ENCODE measurements at regions of chr11 and their contacts with region 1.

Region 1: GRCh38 chr11:47552566-47553416 is at the start of gene CELF1:
- DNase-seq: peak; percentile 85 to 97 (median 92)
- ATAC-seq: peak; percentile 96
- H3K4me3 ChIP-seq: peak within 1 kb of the TSS; percentile 86 to 92
- H3K4me3 Mint-ChIP-seq: peak within 1 kb of the TSS; percentile 93
- H3K27ac ChIP-seq: peak within 1 kb of the TSS; percentile 69 to 82
- H3K27ac Mint-ChIP-seq: peak within 1 kb of the TSS; percentile 97
- H3K4me1 ChIP-seq: peaks cover 41% of the 10 kb centered on the region
- H3K4me1 Mint-ChIP-seq: peaks cover 45% of the 10 kb centered on the region
- H3K27me3 ChIP-seq: no peaks in the 10 kb centered on the region
- H3K27me3 Mint-ChIP-seq: no peaks in the 10 kb centered on the region
- CTCF ChIP-seq: peak; percentile 85
- total RNA-seq, gene CELF1: 93.2 to 96.1 TPM

Region 2: GRCh38 chr11:46936138-46937110 is 616.4 kb before region 1 on chr11 and contains the start of gene CSTPP1:
- CTCF ChIA-PET with region 1: no interaction called
- POLR2A ChIA-PET with region 1: no interaction called
- intact Hi-C with region 1: loop called in 1 of 2 experiments (anchors 10 kb)
- DNase-seq: peak; percentile 80 to 97 (median 93)
- ATAC-seq: peak; percentile 96
- H3K4me3 ChIP-seq: peak within 1 kb of the TSS; percentile 73 to 82
- H3K4me3 Mint-ChIP-seq: peak within 1 kb of the TSS; percentile 97
- H3K27ac ChIP-seq: peak within 1 kb of the TSS; percentile 58 to 71
- H3K27ac Mint-ChIP-seq: peak within 1 kb of the TSS; percentile 95
- H3K4me1 ChIP-seq: peaks cover 9% of the 10 kb centered on the region
- H3K4me1 Mint-ChIP-seq: peaks cover 20% of the 10 kb centered on the region
- H3K27me3 ChIP-seq: no peaks in the 10 kb centered on the region
- H3K27me3 Mint-ChIP-seq: peaks cover 6% of the 10 kb centered on the region
- CTCF ChIP-seq: no peak
- total RNA-seq, gene CSTPP1: 4.1 to 4.6 TPM

Region 3: GRCh38 chr11:47478651-47479329 is 74.0 kb before region 1 on chr11:
- CTCF ChIA-PET with region 1: no interaction called
- POLR2A ChIA-PET with region 1: no interaction called
- intact Hi-C with region 1: loop called in 1 of 2 experiments (anchors 2 kb)
- DNase-seq: no peak
- ATAC-seq: no peak
- H3K4me3 ChIP-seq: no peak overlapping the region
- H3K4me3 Mint-ChIP-seq: no peak overlapping the region
- H3K27ac ChIP-seq: no peak overlapping the region
- H3K27ac Mint-ChIP-seq: peak overlapping the region; percentile 33
- H3K4me1 ChIP-seq: no peaks in the 10 kb centered on the region
- H3K4me1 Mint-ChIP-seq: no peaks in the 10 kb centered on the region
- H3K27me3 ChIP-seq: no peaks in the 10 kb centered on the region
- H3K27me3 Mint-ChIP-seq: no peaks in the 10 kb centered on the region
- CTCF ChIP-seq: no peak

Region 4: GRCh38 chr11:47509077-47509536 is 43.7 kb before region 1 on chr11:
- CTCF ChIA-PET with region 1: no interaction called
- POLR2A ChIA-PET with region 1: no interaction called
- intact Hi-C with region 1: loop called in 1 of 2 experiments (anchors 5 kb)
- DNase-seq: no peak
- ATAC-seq: no peak
- H3K4me3 ChIP-seq: no peak overlapping the region
- H3K4me3 Mint-ChIP-seq: no peak overlapping the region
- H3K27ac ChIP-seq: no peak overlapping the region
- H3K27ac Mint-ChIP-seq: peak overlapping the region; percentile 73
- H3K4me1 ChIP-seq: peaks cover 37% of the 10 kb centered on the region
- H3K4me1 Mint-ChIP-seq: peaks cover 64% of the 10 kb centered on the region
- H3K27me3 ChIP-seq: no peaks in the 10 kb centered on the region
- H3K27me3 Mint-ChIP-seq: no peaks in the 10 kb centered on the region
- CTCF ChIP-seq: no peak

Region 5: DNA sequence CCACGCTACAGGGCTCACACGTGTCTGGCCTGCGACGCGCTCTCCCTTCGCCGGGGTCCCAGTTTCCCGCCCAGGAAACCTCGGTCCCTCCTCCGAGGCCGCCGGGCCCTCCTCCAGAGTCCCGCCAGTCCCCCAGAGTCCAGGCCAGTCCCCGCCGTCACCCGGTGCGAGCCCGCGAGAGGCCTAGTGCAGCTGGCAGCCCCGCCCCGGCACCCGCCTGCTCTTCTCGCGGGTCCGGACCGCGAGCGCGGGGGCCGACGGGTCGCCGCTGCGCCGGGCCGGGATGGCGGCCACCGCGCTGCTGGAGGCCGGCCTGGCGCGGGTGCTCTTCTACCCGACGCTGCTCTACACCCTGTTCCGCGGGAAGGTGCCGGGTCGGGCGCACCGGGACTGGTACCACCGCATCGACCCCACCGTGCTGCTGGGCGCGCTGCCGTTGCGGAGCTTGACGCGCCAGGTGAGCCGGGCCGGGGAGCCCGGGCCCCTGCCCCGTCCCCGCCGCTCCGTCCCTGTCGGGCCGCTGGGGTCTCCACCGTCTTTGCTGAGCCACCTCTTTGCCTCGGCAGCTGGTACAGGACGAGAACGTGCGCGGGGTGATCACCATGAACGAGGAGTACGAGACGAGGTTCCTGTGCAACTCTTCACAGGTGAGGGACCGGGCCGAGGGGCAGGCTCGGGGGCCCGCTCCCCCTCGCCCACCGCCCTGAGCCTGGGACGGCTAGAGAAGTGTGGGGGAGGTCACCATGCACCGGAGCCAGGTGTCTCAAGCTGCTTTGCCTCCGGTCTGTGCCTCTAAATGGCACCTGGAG is 12.8 kb after region 1 on chr11 and contains the start of gene PTPMT1:
- CTCF ChIA-PET with region 1: interaction called, 6 read pairs
- POLR2A ChIA-PET with region 1: interaction called, 19 read pairs
- intact Hi-C with region 1: loop called in 1 of 2 experiments (anchors 1 kb)
- DNase-seq: peak; percentile 26 to 79 (median 63)
- ATAC-seq: peak; percentile 85
- H3K4me3 ChIP-seq: peak within 1 kb of the TSS; percentile 76 to 83
- H3K4me3 Mint-ChIP-seq: peak within 1 kb of the TSS; percentile 85
- H3K27ac ChIP-seq: peak within 1 kb of the TSS; percentile 76 to 86
- H3K27ac Mint-ChIP-seq: peak within 1 kb of the TSS; percentile 84
- H3K4me1 ChIP-seq: peaks cover 13% of the 10 kb centered on the region
- H3K4me1 Mint-ChIP-seq: peaks cover 27% of the 10 kb centered on the region
- H3K27me3 ChIP-seq: no peaks in the 10 kb centered on the region
- H3K27me3 Mint-ChIP-seq: no peaks in the 10 kb centered on the region
- CTCF ChIP-seq: no peak
- total RNA-seq, gene PTPMT1: 24.4 to 24.5 TPM

Region 6: DNA sequence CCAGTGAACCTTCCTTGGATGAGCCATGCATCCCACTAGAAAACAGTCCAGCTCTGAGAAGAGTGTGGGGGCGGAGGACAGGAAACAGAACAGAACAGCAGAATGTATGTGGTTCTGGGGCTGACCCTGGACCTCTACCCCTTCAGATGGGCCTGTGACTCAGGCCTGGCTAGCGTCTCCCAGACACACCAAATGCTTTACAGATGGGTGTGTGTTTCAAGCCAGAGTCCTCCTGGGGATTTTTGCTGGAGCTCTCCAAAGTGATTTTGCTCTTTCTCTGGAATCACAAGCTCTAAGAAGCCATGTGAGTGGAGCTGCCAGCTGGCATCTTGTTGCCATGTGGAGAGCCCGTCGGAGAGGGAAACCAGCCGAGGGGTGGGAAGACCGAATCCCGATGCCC is 54.6 kb after region 1 on chr11:
- CTCF ChIA-PET with region 1: no interaction called
- POLR2A ChIA-PET with region 1: no interaction called
- intact Hi-C with region 1: no loop called
- DNase-seq: no peak
- ATAC-seq: no peak
- H3K4me3 ChIP-seq: no peak overlapping the region
- H3K4me3 Mint-ChIP-seq: no peak overlapping the region
- H3K27ac ChIP-seq: no peak overlapping the region
- H3K27ac Mint-ChIP-seq: no peak overlapping the region
- H3K4me1 ChIP-seq: no peaks in the 10 kb centered on the region
- H3K4me1 Mint-ChIP-seq: no peaks in the 10 kb centered on the region
- H3K27me3 ChIP-seq: no peaks in the 10 kb centered on the region
- H3K27me3 Mint-ChIP-seq: no peaks in the 10 kb centered on the region
- CTCF ChIP-seq: no peak

Region 7: DNA sequence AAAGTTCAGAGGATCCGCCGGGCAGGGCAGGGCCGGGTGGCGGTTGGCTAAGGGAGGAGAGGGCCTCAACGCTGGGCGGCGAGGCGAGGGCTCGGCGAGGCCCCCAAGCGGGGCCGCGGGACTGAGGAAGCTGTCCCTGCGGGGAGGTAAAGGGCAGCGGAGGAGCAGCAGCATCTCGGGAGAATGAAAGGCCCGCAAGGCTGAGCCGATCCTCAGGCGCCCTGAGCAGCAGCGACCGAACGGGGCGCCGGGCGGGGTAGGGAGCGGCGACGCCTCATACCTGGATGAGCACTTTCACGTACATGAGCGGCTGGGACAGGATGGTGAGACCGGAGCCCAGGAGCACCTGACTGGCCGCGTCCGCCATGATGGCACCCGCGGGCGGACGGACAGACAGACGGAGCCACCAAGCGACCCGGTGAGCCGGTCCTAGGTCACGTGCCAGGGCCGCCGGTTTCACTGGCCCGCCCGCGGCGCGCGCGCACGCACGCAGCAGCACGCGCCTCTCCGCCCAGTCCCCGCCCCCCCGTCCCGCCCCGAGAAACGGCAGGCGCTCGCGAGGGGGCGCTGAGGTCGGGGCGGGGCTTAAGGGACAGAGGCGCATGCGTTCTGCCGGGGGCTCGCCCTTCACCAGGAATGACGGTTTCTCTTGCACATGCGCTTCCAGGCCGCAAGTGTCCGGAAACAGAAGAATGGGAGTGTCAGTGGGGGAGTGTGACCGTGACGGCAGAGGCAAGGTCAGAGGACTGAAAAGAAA is 89.5 kb after region 1 on chr11 and contains the start of gene MTCH2:
- CTCF ChIA-PET with region 1: no interaction called
- POLR2A ChIA-PET with region 1: no interaction called
- intact Hi-C with region 1: loop called (anchors 2 to 5 kb)
- DNase-seq: peak; percentile 91 to 98 (median 95)
- ATAC-seq: peak; percentile 95
- H3K4me3 ChIP-seq: peak within 1 kb of the TSS; percentile 42 to 91
- H3K4me3 Mint-ChIP-seq: peak within 1 kb of the TSS; percentile 96
- H3K27ac ChIP-seq: peak within 1 kb of the TSS; percentile 55 to 96
- H3K27ac Mint-ChIP-seq: peak within 1 kb of the TSS; percentile 97
- H3K4me1 ChIP-seq: peaks cover 18% of the 10 kb centered on the region
- H3K4me1 Mint-ChIP-seq: peaks cover 32% of the 10 kb centered on the region
- H3K27me3 ChIP-seq: no peaks in the 10 kb centered on the region
- H3K27me3 Mint-ChIP-seq: no peaks in the 10 kb centered on the region
- CTCF ChIP-seq: no peak
- total RNA-seq, gene MTCH2: 16.4 to 19.5 TPM

Region 8: GRCh38 chr11:47766305-47767227 is 213.8 kb after region 1 on chr11:
- CTCF ChIA-PET with region 1: no interaction called
- POLR2A ChIA-PET with region 1: no interaction called
- intact Hi-C with region 1: loop called in 1 of 2 experiments (anchors 1 kb)
- DNase-seq: peak; percentile 48 to 90 (median 74)
- ATAC-seq: peak; percentile 33
- H3K4me3 ChIP-seq: peak overlapping the region; percentile 75 to 79
- H3K4me3 Mint-ChIP-seq: peak overlapping the region; percentile 94
- H3K27ac ChIP-seq: peak overlapping the region; percentile 91 to 97
- H3K27ac Mint-ChIP-seq: peak overlapping the region; percentile 100
- H3K4me1 ChIP-seq: peaks cover 29% of the 10 kb centered on the region
- H3K4me1 Mint-ChIP-seq: peaks cover 31% of the 10 kb centered on the region
- H3K27me3 ChIP-seq: no peaks in the 10 kb centered on the region
- H3K27me3 Mint-ChIP-seq: no peaks in the 10 kb centered on the region
- CTCF ChIP-seq: no peak